MCF 10A (cell line): ENCODE measurements at regions of chr15 and their contacts with region 1.

Region 1: DNA sequence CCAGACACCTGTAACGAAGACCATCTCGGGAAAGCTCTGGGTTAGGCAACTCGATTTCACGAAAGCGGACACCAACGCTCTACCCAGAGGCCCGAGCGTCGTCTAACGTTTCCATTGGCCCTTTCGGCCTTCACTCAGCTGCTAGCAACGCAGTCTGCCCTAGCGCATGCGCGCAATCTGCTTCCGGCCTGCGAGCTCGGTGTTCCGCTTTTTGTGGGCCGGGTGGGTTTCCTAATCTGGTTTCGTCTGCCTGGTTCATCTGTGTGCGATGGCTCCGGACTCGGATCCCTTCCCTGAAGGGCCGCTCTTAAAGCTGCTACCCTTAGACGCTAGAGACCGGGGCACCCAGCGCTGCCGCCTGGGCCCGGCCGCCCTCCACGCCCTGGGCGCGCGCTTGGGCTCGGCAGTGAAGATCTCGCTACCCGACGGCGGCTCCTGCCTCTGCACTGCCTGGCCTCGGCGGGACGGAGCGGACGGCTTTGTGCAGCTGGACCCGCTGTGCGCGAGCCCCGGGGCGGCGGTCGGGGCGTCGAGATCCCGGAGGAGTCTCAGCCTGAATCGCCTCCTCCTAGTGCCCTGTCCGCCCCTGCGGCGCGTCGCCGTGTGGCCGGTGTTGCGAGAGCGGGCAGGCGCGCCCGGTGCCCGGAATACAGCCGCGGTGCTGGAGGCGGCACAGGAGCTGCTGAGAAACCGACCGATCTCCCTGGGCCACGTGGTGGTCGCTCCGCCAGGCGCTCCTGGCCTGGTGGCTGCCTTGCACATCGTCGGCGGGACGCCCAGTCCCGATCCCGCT is 24.0 kb upstream of the GATM start:
- DNase-seq: peak; percentile 99
- H3K4me3 Mint-ChIP-seq: peak overlapping the region; percentile 91
- H3K27ac Mint-ChIP-seq: peak overlapping the region; percentile 88
- H3K4me1 Mint-ChIP-seq: peaks cover 27% of the 10 kb centered on the region
- H3K27me3 Mint-ChIP-seq: no peaks in the 10 kb centered on the region
- CTCF ChIP-seq: no peak

Region 2: GRCh38 chr15:45126535-45127158 is 275.7 kb before region 1 on chr15:
- CTCF ChIA-PET with region 1: interaction called, 6 read pairs
- POLR2A ChIA-PET with region 1: interaction called, 3 read pairs
- intact Hi-C with region 1: loop called (anchors 1 kb)
- DNase-seq: peak; percentile 63
- H3K4me3 Mint-ChIP-seq: no peak overlapping the region
- H3K27ac Mint-ChIP-seq: no peak overlapping the region
- H3K4me1 Mint-ChIP-seq: peaks cover 11% of the 10 kb centered on the region
- H3K27me3 Mint-ChIP-seq: peaks cover 21% of the 10 kb centered on the region
- CTCF ChIP-seq: peak; percentile 70

Region 3: GRCh38 chr15:45205192-45205591 is 197.2 kb before region 1 on chr15:
- CTCF ChIA-PET with region 1: interaction called, 8 read pairs
- POLR2A ChIA-PET with region 1: interaction called, 62 read pairs
- intact Hi-C with region 1: loop called (anchors 1 kb)
- DNase-seq: peak; percentile 80
- H3K4me3 Mint-ChIP-seq: no peak overlapping the region
- H3K27ac Mint-ChIP-seq: no peak overlapping the region
- H3K4me1 Mint-ChIP-seq: peaks cover 6% of the 10 kb centered on the region
- H3K27me3 Mint-ChIP-seq: no peaks in the 10 kb centered on the region
- CTCF ChIP-seq: peak; percentile 75

Region 4: GRCh38 chr15:45307230-45307924 is 95.0 kb before region 1 on chr15:
- CTCF ChIA-PET with region 1: interaction called, 44 read pairs
- POLR2A ChIA-PET with region 1: interaction called, 5 read pairs
- intact Hi-C with region 1: loop called (anchors 1 kb)
- DNase-seq: peak; percentile 37
- H3K4me3 Mint-ChIP-seq: peak overlapping the region; percentile 35
- H3K27ac Mint-ChIP-seq: no peak overlapping the region
- H3K4me1 Mint-ChIP-seq: peaks cover 6% of the 10 kb centered on the region
- H3K27me3 Mint-ChIP-seq: peaks cover 21% of the 10 kb centered on the region
- CTCF ChIP-seq: peak; percentile 47

Region 5: DNA sequence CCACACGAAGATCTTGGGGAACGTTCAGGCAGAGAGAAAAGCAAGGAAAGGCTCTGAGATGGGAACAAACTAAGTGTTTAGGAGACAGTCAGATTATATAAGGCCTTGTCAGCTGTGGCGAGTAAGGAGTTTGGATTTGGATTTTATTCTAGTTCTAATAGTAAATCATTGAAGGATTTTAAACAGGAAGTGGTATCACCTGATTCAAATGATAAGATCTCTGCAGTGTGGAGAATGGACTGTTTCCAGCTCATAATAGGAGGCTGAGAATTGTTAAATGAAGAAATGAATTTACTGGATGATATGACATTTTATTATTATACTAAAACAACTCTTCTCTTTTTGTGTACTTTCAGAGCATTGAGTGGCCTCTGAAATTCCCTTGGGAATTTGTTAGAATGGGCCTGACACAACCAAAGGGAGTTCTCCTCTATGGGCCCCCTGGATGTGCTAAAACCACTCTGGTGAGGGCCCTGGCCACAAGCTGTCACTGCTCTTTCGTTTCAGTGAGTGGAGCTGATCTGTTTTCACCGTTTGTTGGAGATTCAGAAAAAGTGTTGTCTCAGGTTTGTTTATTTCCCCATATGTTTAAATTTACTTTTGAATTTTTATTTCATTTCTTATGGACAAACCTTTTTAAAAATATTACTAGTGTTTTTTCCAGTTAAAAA is 12.0 kb after region 1 on chr15:
- CTCF ChIA-PET with region 1: interaction called, 11 read pairs
- POLR2A ChIA-PET with region 1: interaction called, 17 read pairs
- intact Hi-C with region 1: no loop called
- DNase-seq: no peak
- H3K4me3 Mint-ChIP-seq: no peak overlapping the region
- H3K27ac Mint-ChIP-seq: no peak overlapping the region
- H3K4me1 Mint-ChIP-seq: peaks cover 14% of the 10 kb centered on the region
- H3K27me3 Mint-ChIP-seq: no peaks in the 10 kb centered on the region
- CTCF ChIP-seq: no peak

Region 6: GRCh38 chr15:45468294-45468693 is 65.9 kb after region 1 on chr15:
- CTCF ChIA-PET with region 1: no interaction called
- POLR2A ChIA-PET with region 1: no interaction called
- intact Hi-C with region 1: no loop called
- DNase-seq: no peak
- H3K4me3 Mint-ChIP-seq: no peak overlapping the region
- H3K27ac Mint-ChIP-seq: no peak overlapping the region
- H3K4me1 Mint-ChIP-seq: no peaks in the 10 kb centered on the region
- H3K27me3 Mint-ChIP-seq: no peaks in the 10 kb centered on the region
- CTCF ChIP-seq: no peak